Panc1 (cell line): ENCODE measurements at regions of chr6 and their contacts with region 1.

Region 1: DNA sequence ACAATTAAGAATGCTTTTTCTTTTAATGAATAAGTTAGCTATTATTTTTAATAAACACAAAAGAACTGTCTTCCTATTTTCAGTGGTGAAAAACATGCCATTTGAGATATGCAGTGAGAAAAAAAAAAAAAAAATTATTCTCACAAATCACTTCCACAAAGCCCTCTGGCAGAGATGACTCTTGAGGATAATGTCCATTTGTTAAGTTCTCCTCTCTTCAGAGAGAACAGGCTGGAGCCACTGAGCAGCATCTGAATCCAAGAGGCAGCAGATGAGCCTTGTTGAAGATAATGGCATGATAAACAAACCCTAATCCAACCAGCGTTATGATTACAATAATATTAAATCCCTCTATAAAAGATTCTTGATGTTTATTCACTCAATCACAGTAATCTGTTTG is 105.0 kb downstream of the PTPRK start:
- DNase-seq: no peak
- ATAC-seq: no peak
- H3K4me3 ChIP-seq: no peak overlapping the region
- H3K27ac ChIP-seq: no peak overlapping the region
- H3K4me1 ChIP-seq: no peaks in the 10 kb centered on the region
- H3K27me3 ChIP-seq: no peaks in the 10 kb centered on the region
- CTCF ChIP-seq: no peak

Region 2: GRCh38 chr6:128139519-128139918 is 275.9 kb before region 1 on chr6:
- CTCF ChIA-PET with region 1: no interaction called
- POLR2A ChIA-PET with region 1: no interaction called
- in situ Hi-C with region 1: no loop called
- intact Hi-C with region 1: no loop called
- DNase-seq: peak; percentile 7
- ATAC-seq: no peak
- H3K4me3 ChIP-seq: no peak overlapping the region
- H3K27ac ChIP-seq: no peak overlapping the region
- H3K4me1 ChIP-seq: no peaks in the 10 kb centered on the region; the same call in 1 of the 2 replicates
- H3K27me3 ChIP-seq: no peaks in the 10 kb centered on the region
- CTCF ChIP-seq: no peak

Region 3: GRCh38 chr6:128316258-128316929 is 99.0 kb before region 1 on chr6:
- CTCF ChIA-PET with region 1: no interaction called
- POLR2A ChIA-PET with region 1: no interaction called
- in situ Hi-C with region 1: no loop called
- intact Hi-C with region 1: no loop called
- DNase-seq: no peak
- ATAC-seq: no peak
- H3K4me3 ChIP-seq: no peak overlapping the region
- H3K27ac ChIP-seq: no peak overlapping the region
- H3K4me1 ChIP-seq: no peaks in the 10 kb centered on the region
- H3K27me3 ChIP-seq: no peaks in the 10 kb centered on the region
- CTCF ChIP-seq: no peak

Region 4: DNA sequence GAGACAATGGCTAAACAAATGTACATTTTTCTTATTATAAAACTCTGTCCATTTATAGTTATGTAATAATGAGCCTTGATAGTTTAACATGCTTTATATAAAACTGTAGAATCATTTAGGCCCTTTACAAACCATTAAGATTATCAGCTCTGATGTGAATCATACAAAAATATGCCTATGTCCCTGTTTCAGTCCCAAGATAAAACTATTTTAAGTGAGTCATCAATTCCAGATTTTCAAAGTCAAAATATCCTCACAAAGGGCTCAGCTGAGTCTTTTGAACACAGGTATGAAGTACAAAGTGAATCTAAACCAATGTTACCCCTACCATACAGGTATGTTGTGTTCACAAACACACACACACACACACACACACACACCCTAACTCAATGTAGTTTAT is 17.0 kb after region 1 on chr6:
- CTCF ChIA-PET with region 1: no interaction called
- POLR2A ChIA-PET with region 1: no interaction called
- in situ Hi-C with region 1: no loop called
- intact Hi-C with region 1: no loop called
- DNase-seq: no peak
- ATAC-seq: no peak
- H3K4me3 ChIP-seq: no peak overlapping the region
- H3K27ac ChIP-seq: no peak overlapping the region
- H3K4me1 ChIP-seq: no peaks in the 10 kb centered on the region
- H3K27me3 ChIP-seq: no peaks in the 10 kb centered on the region
- CTCF ChIP-seq: no peak

Region 5: DNA sequence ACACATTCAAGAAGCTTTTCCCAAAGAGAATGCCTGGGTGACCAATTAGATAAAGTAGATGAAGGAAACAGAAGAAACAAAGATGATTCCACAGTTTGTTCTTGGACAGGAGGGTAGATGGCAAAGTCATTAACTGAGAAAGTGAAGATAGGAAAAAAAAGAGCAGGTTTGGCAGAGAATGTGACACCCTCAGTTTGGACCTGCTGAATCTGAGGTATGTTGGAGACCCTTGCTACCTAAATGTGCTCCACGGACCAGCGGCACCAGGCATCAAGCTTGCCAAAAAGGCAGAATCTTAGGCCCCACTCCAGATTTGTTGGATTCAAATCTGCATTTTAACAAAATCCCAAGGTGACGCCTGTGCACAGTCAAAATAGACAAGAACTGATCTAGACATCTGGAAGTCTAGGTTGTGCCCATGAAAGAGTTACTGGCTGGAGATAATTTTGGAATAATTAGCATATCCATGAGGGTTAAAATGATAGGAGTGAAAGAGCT is 1245.0 kb after region 1 on chr6:
- CTCF ChIA-PET with region 1: no interaction called
- POLR2A ChIA-PET with region 1: interaction called, 12 read pairs
- in situ Hi-C with region 1: no loop called
- intact Hi-C with region 1: no loop called
- DNase-seq: no peak
- ATAC-seq: 0 out of 2 replicates have a peak, but pooled peaks have one; percentile 9
- H3K4me3 ChIP-seq: peak overlapping the region; percentile 30 to 36
- H3K27ac ChIP-seq: peak overlapping the region; percentile 79
- H3K4me1 ChIP-seq: peaks cover 11% of the 10 kb centered on the region
- H3K27me3 ChIP-seq: no peaks in the 10 kb centered on the region
- CTCF ChIP-seq: no peak